Endothelial cell of umbilical vein (primary cell): ENCODE measurements at regions of chr4 and their contacts with region 1.

Region 1: GRCh38 chr4:47122592-47123291 is 91.4 kb downstream of the GABRB1 start:
- DNase-seq: peak; percentile 74
- H3K4me3 ChIP-seq: no peak overlapping the region
- H3K27ac ChIP-seq: no peak overlapping the region
- H3K4me1 ChIP-seq: no peaks in the 10 kb centered on the region
- H3K27me3 ChIP-seq: no peaks in the 10 kb centered on the region
- CTCF ChIP-seq: peak; percentile 79 to 85
- POLR2A ChIP-seq: no peak

Region 2: GRCh38 chr4:45985038-45985437 is 1137.7 kb before region 1 on chr4:
- CTCF ChIA-PET with region 1: no interaction called
- POLR2A ChIA-PET with region 1: no interaction called
- dilution Hi-C with region 1: no loop called
- intact Hi-C with region 1: no loop called
- DNase-seq: no peak
- H3K4me3 ChIP-seq: no peak overlapping the region
- H3K27ac ChIP-seq: no peak overlapping the region
- H3K4me1 ChIP-seq: no peaks in the 10 kb centered on the region
- H3K27me3 ChIP-seq: no peaks in the 10 kb centered on the region
- CTCF ChIP-seq: no peak
- POLR2A ChIP-seq: no peak

Region 3: DNA sequence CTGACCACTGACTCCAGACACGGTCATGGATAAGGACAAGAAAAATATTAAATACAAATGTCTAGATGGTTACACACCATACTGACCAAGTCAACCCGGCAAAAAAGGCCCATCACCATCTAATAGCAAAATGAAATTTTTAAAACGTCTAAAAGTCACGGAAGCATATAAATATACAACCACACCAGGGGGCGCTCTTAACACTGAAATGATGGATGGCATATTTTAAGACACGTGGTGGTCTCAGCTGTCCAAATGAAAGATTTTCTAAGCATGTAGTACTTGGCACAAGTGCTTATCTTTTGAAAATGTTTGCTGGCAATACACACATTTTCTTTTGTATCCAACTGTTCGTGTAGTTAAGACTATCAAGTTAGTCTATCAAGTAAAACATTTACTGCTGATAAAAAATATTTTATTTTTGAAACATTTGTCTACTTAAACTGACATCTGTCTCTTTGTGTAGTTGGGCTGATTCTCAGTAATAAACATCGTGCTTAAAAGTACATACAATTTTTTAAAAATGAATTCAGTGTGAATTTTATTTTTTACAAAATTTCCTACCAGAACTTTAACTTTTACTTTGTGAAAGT is 278.3 kb before region 1 on chr4:
- CTCF ChIA-PET with region 1: interaction called, 74 read pairs
- POLR2A ChIA-PET with region 1: no interaction called
- dilution Hi-C with region 1: no loop called
- intact Hi-C with region 1: loop called (anchors 1 kb)
- DNase-seq: peak; percentile 64
- H3K4me3 ChIP-seq: no peak overlapping the region
- H3K27ac ChIP-seq: no peak overlapping the region
- H3K4me1 ChIP-seq: no peaks in the 10 kb centered on the region
- H3K27me3 ChIP-seq: no peaks in the 10 kb centered on the region
- CTCF ChIP-seq: peak; percentile 53 to 55
- POLR2A ChIP-seq: no peak

Region 4: DNA sequence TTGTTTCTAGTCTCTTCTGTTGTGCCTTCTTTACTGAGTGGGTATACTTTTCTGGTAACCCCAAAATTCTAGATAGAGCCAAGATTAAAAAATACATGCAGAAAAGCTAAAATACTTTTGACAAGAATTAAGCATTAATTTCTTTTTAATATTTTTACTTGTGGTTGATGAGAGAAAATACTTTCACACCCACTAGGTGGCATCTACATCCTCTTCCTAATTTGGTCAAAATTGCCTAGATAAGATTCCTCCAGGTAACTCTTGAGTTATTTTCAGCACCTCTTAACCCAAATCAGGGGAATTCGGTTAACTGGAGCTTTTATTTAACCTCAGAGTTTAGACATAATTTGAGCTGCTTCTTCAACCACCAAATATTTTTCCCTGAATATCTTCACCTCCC is 185.2 kb before region 1 on chr4:
- CTCF ChIA-PET with region 1: interaction called, 110 read pairs
- POLR2A ChIA-PET with region 1: no interaction called
- dilution Hi-C with region 1: no loop called
- intact Hi-C with region 1: loop called (anchors 1 kb)
- DNase-seq: peak; percentile 6
- H3K4me3 ChIP-seq: no peak overlapping the region
- H3K27ac ChIP-seq: no peak overlapping the region
- H3K4me1 ChIP-seq: no peaks in the 10 kb centered on the region
- H3K27me3 ChIP-seq: no peaks in the 10 kb centered on the region
- CTCF ChIP-seq: peak in 1 of 2 donors; percentile 1
- POLR2A ChIP-seq: no peak

Region 5: DNA sequence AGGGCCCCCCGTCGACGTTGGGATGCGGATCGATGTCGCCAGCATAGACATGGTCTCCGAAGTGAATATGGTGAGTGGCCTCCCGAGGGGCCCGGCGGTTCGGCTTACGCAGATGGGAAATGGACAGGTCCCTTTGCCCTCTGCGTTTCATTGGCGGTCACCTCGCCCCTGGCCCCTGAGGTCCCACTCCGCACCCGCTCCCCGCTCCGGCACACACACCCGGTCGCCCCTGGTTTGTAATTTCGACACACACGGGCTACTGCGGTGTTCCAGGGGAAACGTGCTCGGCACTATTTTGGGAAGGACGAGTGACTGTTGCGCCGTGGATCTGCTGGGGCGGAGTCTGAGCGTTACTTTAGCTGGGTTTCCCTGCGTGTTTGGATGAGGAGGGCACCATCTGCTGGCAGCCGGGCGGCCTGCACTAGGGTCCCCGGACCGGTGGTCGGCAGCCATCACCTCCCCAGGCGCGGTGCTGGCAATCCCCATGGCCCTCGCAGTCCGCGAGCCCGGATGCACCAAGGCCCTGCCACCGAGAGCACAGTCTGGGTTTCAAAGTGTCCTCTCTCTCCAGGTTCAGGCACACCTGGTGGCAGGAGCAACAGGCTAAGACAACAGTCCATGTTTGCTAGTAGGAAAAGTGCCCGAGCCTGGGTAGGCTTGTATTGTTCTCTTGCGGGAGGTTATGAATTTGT is 90.2 kb before region 1 on chr4:
- CTCF ChIA-PET with region 1: interaction called, 19 read pairs
- POLR2A ChIA-PET with region 1: no interaction called
- dilution Hi-C with region 1: no loop called
- intact Hi-C with region 1: no loop called
- DNase-seq: peak; percentile 38
- H3K4me3 ChIP-seq: peak overlapping the region; percentile 2 to 74 (median 30)
- H3K27ac ChIP-seq: no peak overlapping the region
- H3K4me1 ChIP-seq: peaks cover 14% of the 10 kb centered on the region
- H3K27me3 ChIP-seq: peaks cover 11 to 32% of the 10 kb centered on the region in 2 experiments
- CTCF ChIP-seq: peak; percentile 80 to 96
- POLR2A ChIP-seq: no peak

Region 6: GRCh38 chr4:47088298-47088697 is 34.4 kb before region 1 on chr4:
- CTCF ChIA-PET with region 1: interaction called, 13 read pairs
- POLR2A ChIA-PET with region 1: no interaction called
- dilution Hi-C with region 1: no loop called
- intact Hi-C with region 1: no loop called
- DNase-seq: no peak
- H3K4me3 ChIP-seq: no peak overlapping the region
- H3K27ac ChIP-seq: no peak overlapping the region
- H3K4me1 ChIP-seq: no peaks in the 10 kb centered on the region
- H3K27me3 ChIP-seq: peaks cover 0 to 1% of the 10 kb centered on the region in 2 experiments
- CTCF ChIP-seq: no peak
- POLR2A ChIP-seq: no peak

Region 7: DNA sequence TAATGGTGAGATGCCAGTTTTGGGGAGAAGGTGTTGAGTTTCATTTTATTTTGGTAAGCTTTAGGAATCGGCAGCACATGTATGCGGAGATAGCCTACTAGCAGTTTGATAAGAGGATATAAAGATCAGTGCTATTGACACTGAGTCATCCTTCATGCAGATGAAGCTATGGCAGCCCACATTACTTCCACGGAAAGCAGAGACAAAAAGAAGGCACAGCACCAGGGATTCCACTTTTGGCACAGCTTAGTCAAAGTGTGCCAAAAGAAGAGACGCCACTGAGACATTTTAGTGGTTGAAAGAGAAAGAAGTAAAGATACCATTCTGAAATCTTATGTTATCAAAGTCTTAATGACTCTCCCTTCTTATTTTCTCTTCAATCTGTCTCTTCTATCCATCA is 12.5 kb after region 1 on chr4:
- CTCF ChIA-PET with region 1: interaction called, 34 read pairs
- POLR2A ChIA-PET with region 1: no interaction called
- dilution Hi-C with region 1: no loop called
- intact Hi-C with region 1: no loop called
- DNase-seq: no peak
- H3K4me3 ChIP-seq: no peak overlapping the region
- H3K27ac ChIP-seq: no peak overlapping the region
- H3K4me1 ChIP-seq: no peaks in the 10 kb centered on the region
- H3K27me3 ChIP-seq: no peaks in the 10 kb centered on the region
- CTCF ChIP-seq: no peak
- POLR2A ChIP-seq: no peak

Region 8: DNA sequence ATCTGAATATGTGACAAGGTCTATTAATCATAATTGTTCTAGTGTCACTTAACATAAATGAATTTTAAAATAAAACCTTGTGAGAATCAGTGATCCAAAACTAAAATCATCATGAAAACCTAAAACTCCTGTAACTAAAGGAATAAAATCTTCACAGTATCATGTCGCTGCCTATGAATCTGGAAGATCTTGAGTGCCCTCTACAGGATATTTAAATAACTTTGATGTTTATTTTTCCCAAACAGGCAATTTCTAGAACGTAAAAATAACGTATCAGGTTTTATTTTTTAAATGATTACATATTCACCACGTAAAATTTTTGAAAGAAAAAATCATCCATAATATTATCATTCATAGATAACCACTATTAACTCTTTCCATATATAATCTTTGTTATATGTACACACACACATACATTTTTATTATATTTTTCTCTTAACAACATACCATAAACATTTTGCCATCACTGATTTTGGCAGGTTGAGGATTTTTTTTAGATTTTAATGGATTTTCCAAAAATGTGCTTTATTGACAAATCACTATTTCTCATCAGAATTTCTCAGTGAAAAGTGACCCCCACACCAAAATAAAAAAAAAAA is 261.2 kb after region 1 on chr4:
- CTCF ChIA-PET with region 1: interaction called, 12 read pairs
- POLR2A ChIA-PET with region 1: no interaction called
- dilution Hi-C with region 1: no loop called
- intact Hi-C with region 1: loop called (anchors 2 kb)
- DNase-seq: peak; percentile 28
- H3K4me3 ChIP-seq: no peak overlapping the region
- H3K27ac ChIP-seq: no peak overlapping the region
- H3K4me1 ChIP-seq: no peaks in the 10 kb centered on the region
- H3K27me3 ChIP-seq: no peaks in the 10 kb centered on the region
- CTCF ChIP-seq: peak; percentile 13 to 20
- POLR2A ChIP-seq: no peak